ENCODE measurements at regions of chr14 and their contacts with region 1.

Region 1: DNA sequence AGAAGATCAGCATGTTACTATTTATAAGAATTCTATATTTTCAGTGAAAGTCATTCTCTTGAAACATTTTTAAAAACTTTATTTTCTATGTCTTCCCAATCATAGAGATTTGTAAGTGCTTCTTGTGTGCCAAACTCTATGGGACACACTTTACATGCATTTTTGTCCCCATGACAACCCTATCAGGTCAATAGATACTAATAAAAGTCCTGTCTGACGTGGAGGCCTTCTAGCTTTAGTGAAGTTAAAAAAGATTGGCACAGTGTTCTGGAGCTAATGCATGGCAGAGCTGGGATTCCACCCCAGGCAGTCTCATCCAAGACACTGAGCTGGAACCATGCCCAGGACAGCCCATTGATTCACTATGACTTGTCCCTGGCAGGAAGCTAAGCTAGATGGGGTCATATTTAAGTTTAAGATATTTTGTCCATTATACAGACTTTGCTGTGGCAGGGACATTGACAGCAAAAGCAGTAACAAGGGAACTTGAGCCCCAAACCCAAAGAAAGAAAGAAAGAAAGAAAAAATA is 28.1 kb downstream of the TTC6 start:
- DNase-seq: no peak
- ATAC-seq: no peak
- H3K4me3 Mint-ChIP-seq: no peak overlapping the region
- H3K27ac Mint-ChIP-seq: no peak overlapping the region
- H3K4me1 Mint-ChIP-seq: peaks cover 4% of the 10 kb centered on the region
- H3K27me3 Mint-ChIP-seq: peaks cover 75% of the 10 kb centered on the region
- CTCF ChIP-seq: no peak

Region 2: GRCh38 chr14:37874429-37875191 is 251.1 kb after region 1 on chr14:
- CTCF ChIA-PET with region 1: interaction called, 16 read pairs
- POLR2A ChIA-PET with region 1: no interaction called
- DNase-seq: peak; percentile 94
- ATAC-seq: peak; percentile 97
- H3K4me3 Mint-ChIP-seq: no peak overlapping the region
- H3K27ac Mint-ChIP-seq: no peak overlapping the region
- H3K4me1 Mint-ChIP-seq: peaks cover 16% of the 10 kb centered on the region
- H3K27me3 Mint-ChIP-seq: peaks cover 18% of the 10 kb centered on the region
- CTCF ChIP-seq: peak; percentile 92

Measured in WTC11 (cell line).